Psoas muscle (tissue), 8 donors: ENCODE measurements at regions of chr3 and their contacts with region 1.

Region 1: GRCh38 chr3:184289426-184289938 is 9.6 kb upstream of the PSMD2 start:
- DNase-seq: peak; percentile 45 to 71
- ATAC-seq: peak; percentile 65 to 88 (median 82)
- H3K4me3 ChIP-seq: no peak overlapping the region
- H3K27ac ChIP-seq: no peak overlapping the region
- H3K4me1 ChIP-seq: no peaks in the 10 kb centered on the region
- H3K27me3 ChIP-seq: no peaks in the 10 kb centered on the region
- CTCF ChIP-seq: peak; percentile 57

Region 2: DNA sequence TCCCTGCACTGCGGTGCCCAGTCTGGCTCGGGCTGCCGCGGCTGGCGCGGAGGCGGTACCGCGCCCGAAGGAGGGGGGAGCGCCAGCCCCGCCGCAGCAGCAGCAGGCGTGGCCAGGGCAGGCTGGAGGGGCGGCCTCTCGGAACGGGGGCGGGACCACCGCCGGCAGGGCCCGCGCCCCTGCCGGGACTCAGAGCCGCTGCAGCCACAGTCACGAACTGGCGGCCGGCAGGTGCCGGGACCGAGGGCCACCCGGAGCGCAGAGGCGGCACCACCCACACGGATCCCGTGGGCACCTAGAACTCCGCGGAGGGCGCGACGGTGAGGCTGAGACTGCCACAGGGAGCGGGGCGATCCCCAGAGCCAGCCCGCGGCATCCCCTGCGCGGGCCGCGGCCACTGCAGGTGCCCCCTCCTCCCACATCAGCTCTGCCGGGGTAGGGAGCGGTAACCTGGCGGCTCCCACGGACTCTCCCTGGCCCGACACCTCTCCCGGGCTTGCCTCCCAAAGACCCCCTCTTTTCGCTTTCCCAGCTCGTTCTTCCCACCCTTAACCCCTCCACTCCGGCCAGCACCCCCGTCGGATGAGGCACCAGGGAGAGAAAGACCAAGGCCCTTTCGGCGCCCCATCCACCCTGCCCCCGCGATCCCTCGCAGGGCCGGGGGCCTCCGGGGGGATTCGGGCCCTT is 59.9 kb before region 1 on chr3 and contains the start of gene VWA5B2:
- intact Hi-C with region 1: loop called in 1 of 2 experiments (anchors 2 kb)
- DNase-seq: peak; percentile 66 to 70
- ATAC-seq: peak; percentile 73 to 86 (median 78)
- H3K4me3 ChIP-seq: peak within 1 kb of the TSS; percentile 59
- H3K27ac ChIP-seq: no peak within 1 kb of the TSS
- H3K4me1 ChIP-seq: no peaks in the 10 kb centered on the region
- H3K27me3 ChIP-seq: peaks cover 0 to 63% (median 18%) of the 10 kb centered on the region in 3 donors
- CTCF ChIP-seq: peak; percentile 23
- total RNA-seq, gene VWA5B2: 0.26 TPM in 1 of 4 donors, not detected in the others

Region 3: GRCh38 chr3:184275961-184276910 is 13.2 kb before region 1 on chr3 and contains the start of gene ECE2:
- intact Hi-C with region 1: no loop called
- DNase-seq: no peak
- ATAC-seq: peak in 3 of 4 donors; percentile 44 to 54 (median 50)
- H3K4me3 ChIP-seq: peak within 1 kb of the TSS; percentile 25
- H3K27ac ChIP-seq: no peak within 1 kb of the TSS
- H3K4me1 ChIP-seq: no peaks in the 10 kb centered on the region
- H3K27me3 ChIP-seq: peaks cover 0 to 47% (median 11%) of the 10 kb centered on the region in 3 donors
- CTCF ChIP-seq: no peak
- total RNA-seq, gene ECE2: not detected